Dorsolateral prefrontal cortex (tissue), 120 donors: ENCODE measurements at regions of chr7 and their contacts with region 1.

Region 1: GRCh38 chr7:95684037-95684436 is 87.7 kb upstream of the PDK4 start:
- DNase-seq: peak in 1 of 10 donors; percentile 28
- H3K4me3 ChIP-seq: no peak overlapping the region
- H3K27ac ChIP-seq: peak overlapping the region in 31 of 59 donors; percentile 5 to 89 (median 45)
- H3K27me3 ChIP-seq: no peaks in the 10 kb centered on the region
- CTCF ChIP-seq: peak; percentile 46 to 92 (median 74)

Region 2: DNA sequence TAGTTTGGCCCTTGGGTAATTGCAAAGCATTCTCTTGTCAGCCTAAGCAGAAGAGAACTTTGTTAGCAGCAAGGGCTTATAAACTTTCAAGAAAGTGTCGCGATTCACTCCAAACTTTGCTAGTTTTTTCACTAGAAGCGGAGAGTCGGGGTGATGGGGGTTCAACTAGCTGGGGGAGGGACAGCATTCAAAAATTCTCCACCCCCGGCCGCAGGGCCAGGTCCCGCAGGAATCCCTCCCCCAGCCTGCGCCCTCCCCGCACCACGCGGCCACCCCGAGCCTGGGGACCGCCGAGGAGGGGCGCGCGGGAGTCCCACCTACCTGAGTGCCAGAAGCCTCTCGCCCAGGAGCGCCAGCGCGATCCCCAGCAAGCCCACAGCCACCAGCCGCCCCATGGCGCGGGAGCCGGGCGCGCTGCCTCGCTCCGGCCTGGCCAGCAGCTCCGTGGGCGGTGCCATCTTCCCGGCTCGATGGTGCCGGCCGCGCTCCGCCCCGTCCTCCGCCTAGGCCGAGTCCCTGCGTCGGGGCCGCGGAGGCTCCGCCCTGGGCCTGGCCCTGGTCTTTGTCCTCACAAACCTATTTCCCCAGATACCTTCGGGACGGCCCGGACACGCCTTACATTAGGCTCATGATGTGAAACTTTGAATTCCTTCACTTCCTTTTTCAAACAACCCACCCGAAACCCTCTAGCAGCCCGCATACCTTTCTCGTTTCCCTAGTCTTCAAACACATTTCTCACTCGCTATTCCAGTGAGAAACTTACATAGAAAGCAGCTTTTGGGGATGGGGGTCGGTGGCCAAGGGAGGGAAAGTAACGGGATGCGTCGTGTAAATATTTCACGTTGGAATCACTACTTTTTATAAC is 249.2 kb before region 1 on chr7 and contains the start of gene PON2:
- intact Hi-C with region 1: no loop called
- DNase-seq: peak; percentile 5 to 77 (median 51)
- H3K4me3 ChIP-seq: peak within 1 kb of the TSS; percentile 52 to 93 (median 77)
- H3K27ac ChIP-seq: peak within 1 kb of the TSS; percentile 52 to 97 (median 93)
- H3K27me3 ChIP-seq: no peaks in the 10 kb centered on the region
- CTCF ChIP-seq: peak in 16 of 56 donors; percentile 6 to 36 (median 19)
- total RNA-seq, gene PON2: 79.1 to 321 (median 167) TPM

Region 3: DNA sequence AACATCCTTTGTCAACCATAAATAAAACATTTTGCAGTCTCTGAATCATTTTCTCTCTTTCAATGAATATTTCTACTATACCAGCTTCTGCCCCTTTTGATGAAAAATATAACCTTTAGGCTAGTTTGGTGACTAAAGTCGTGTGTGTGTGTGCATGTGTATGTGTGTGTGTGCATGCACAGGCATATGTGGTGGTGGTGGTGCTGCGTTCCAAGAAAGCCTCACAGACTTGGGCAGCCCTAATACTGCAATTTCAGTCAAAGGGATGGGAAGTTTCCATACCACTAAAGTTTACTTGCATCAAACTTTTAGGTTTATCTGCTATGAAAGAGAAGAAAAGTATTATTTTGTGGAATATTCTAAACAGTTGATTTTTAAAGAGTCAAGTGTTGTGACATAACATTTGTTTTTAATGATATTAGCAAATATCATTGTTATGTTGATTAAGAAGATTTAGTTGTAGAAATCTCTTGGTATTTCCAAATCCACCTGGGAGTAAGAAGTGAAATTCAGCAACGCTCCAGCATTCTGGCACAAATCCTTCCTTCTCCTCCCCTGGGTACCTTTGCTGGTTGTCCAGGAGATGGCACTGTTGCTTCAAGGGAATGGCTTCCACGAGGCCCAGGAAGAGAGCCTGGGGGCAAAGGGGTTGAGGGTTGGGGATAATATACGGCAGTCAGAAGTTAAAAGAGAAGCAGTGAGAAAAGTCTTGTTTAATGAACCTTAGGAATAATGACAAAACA is 156.8 kb before region 1 on chr7:
- intact Hi-C with region 1: loop called (anchors 1 to 2 kb)
- DNase-seq: peak in 6 of 10 donors; percentile 23 to 73 (median 54)
- H3K4me3 ChIP-seq: peak overlapping the region in 11 of 59 donors; percentile 1 to 31 (median 12)
- H3K27ac ChIP-seq: peak overlapping the region in 58 of 59 donors; percentile 46 to 99 (median 93)
- H3K27me3 ChIP-seq: no peaks in the 10 kb centered on the region
- CTCF ChIP-seq: peak; percentile 52 to 98 (median 92)

Region 4: DNA sequence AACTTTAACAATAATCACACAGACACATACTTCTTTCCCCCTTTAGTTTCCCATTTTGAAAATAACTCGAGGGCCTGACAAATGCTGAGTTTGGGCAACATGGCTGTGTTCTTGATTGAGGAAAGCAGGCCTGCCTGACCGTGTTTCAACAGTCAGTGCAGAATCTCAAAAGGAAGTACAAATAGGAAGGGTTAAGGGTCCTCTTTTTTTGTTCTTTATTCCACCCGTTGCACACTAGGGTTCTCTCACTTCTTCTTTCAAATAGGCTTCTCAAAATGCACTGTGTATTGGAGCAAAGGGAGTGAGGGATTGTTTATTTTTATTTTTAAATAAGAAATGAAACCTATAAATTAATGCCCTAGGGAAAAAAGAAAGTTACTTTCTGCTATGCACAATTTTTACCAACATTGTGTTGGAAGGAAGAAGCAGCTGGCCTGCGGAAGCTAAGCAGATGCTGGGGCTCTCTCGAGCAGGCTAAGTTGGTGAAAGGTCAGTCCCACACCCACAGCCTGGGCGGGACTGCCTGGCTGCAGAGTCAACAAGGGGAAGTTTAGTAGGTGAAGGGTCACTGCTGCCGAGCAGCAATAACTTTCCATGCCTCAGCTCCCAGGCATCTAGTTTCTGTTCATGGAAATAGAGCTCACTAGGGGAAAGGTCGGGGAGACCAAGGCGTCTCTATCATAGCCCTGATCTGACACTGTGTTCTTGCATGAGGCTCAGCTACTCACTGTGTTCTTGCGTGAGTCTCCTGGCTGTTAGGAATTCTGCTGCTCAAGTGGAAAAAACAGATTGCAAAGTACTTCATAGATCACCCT is 75.5 kb before region 1 on chr7:
- intact Hi-C with region 1: loop called (anchors 5 kb)
- DNase-seq: peak; percentile 9 to 71 (median 64)
- H3K4me3 ChIP-seq: peak overlapping the region in 42 of 59 donors; percentile 0 to 48 (median 20)
- H3K27ac ChIP-seq: peak overlapping the region; percentile 51 to 95 (median 85)
- H3K27me3 ChIP-seq: no peaks in the 10 kb centered on the region
- CTCF ChIP-seq: peak in 1 of 56 donors; percentile 13